ENCODE measurements at regions of chr10 and their contacts with region 1.

Region 1: DNA sequence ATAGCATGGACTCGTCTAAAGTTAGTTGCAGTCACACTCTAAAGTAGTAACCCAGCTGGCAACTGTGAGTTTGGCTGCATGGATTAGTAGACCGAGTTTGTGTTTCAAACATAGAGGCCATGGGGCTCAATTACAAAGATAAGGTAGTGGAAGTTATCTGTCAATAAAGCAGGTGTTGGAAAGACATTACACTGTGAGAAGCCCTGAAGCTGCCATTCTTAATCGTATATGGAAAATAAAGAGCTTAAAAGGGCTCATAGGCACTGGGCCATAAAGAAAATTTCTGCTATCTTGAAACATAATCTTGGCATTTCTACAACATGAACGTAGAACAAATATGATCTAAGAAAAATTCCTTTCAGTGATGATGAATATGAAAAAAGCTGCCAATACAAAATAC is 837.7 kb downstream of the REEP3 start:
- DNase-seq: no peak
- H3K4me3 ChIP-seq: no peak overlapping the region
- H3K27ac ChIP-seq: no peak overlapping the region
- H3K4me1 ChIP-seq: no peaks in the 10 kb centered on the region
- H3K27me3 ChIP-seq: no peaks in the 10 kb centered on the region
- CTCF ChIP-seq: no peak
- POLR2A ChIP-seq: no peak

Region 2: DNA sequence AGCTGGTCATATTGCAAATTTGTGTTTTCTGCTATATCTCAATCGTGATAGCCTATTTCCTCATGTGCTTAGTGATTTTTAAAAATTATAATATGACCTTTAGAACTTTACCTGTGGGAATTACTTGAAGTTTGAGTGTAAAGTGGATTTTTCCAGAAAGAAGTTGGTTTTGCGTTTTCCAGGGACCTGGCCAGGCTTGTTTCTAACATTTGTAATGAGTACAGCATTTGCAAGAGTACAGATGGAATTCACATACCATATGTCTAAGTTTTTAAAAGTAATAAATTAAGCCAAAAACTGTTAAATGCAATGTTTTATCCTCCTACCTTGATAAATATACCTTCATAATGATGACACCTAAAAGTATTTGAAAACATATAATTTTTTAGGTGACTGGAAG is 394.5 kb before region 1 on chr10:
- intact Hi-C with region 1: loop called (anchors 5 kb)
- DNase-seq: no peak
- H3K4me3 ChIP-seq: no peak overlapping the region
- H3K27ac ChIP-seq: no peak overlapping the region
- H3K4me1 ChIP-seq: no peaks in the 10 kb centered on the region
- H3K27me3 ChIP-seq: no peaks in the 10 kb centered on the region
- CTCF ChIP-seq: no peak
- POLR2A ChIP-seq: no peak

Region 3: DNA sequence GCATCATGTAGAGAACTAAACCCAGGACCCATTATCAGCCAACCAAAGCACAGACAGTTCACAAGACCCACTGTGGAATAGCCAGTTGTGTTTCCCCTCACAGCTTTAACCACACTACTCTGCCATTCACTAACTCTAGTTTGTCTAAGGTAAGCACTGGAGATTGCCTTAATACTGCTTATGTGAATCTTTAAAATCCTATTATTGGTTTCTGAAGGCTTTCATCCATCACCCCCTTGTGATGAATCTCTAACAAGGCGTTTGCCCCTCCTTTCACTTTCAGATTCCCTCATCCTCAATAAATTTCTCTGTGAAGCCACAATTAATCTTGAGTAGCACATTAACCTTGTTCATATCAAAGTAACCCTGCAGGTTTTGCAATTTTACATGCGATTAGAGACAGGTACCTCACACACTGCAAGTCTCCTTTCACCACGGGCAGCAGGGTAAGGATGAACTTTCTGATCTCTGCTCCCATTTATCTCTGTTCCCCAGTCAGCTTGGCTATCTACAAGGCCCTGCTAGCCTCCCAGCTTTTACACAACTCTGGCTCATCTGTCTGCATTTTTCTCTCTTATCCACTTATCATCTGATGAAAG is 52.1 kb before region 1 on chr10:
- intact Hi-C with region 1: no loop called
- DNase-seq: no peak
- H3K4me3 ChIP-seq: no peak overlapping the region
- H3K27ac ChIP-seq: no peak overlapping the region
- H3K4me1 ChIP-seq: no peaks in the 10 kb centered on the region
- H3K27me3 ChIP-seq: no peaks in the 10 kb centered on the region
- CTCF ChIP-seq: no peak
- POLR2A ChIP-seq: no peak

Region 4: GRCh38 chr10:64416011-64416410 is 57.1 kb after region 1 on chr10:
- intact Hi-C with region 1: no loop called
- DNase-seq: no peak
- H3K4me3 ChIP-seq: no peak overlapping the region
- H3K27ac ChIP-seq: no peak overlapping the region
- H3K4me1 ChIP-seq: no peaks in the 10 kb centered on the region
- H3K27me3 ChIP-seq: no peaks in the 10 kb centered on the region
- CTCF ChIP-seq: no peak
- POLR2A ChIP-seq: no peak

Region 5: DNA sequence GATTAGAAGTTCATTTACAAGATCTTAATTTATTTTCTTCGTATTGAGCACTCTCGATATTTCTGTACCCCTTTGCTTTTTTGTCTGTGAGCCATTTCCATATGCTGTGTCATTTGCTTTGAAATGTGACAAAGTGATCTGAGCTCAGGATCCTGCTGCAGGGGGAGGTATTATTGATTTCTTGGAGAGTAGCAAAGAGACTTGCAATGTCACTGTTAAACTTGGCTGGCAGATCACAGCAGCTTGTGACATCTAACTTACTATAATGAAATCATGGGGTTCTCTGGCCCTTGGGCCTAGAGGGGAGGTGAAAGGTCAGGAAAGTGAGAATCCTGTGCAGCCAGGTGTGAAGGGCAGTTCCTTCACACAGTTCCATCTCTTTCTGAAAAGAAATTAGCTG is 85.7 kb after region 1 on chr10:
- intact Hi-C with region 1: no loop called
- DNase-seq: no peak
- H3K4me3 ChIP-seq: no peak overlapping the region
- H3K27ac ChIP-seq: no peak overlapping the region
- H3K4me1 ChIP-seq: no peaks in the 10 kb centered on the region
- H3K27me3 ChIP-seq: no peaks in the 10 kb centered on the region
- CTCF ChIP-seq: no peak
- POLR2A ChIP-seq: no peak

Region 6: DNA sequence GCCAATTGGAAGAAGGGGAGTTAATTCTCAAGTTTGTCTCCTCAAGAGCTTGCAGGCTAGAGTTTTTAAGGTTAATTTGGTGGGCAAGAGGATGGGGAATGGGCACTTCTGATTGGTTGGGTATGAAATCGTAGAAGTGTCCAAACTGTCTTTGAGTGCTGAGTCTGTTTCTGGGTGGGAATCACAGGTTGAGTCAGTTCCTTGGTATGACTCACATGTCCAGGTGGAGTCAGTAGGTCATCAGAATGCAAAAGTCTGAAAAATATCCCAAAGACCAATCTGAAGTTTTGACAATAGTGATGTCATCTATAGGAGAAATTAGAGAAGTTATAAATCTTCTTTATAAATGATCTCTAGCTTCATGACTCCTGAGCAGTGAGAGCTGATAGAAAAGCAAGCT is 414.4 kb after region 1 on chr10:
- intact Hi-C with region 1: no loop called
- DNase-seq: no peak
- H3K4me3 ChIP-seq: no peak overlapping the region
- H3K27ac ChIP-seq: no peak overlapping the region
- H3K4me1 ChIP-seq: no peaks in the 10 kb centered on the region
- H3K27me3 ChIP-seq: no peaks in the 10 kb centered on the region
- CTCF ChIP-seq: no peak
- POLR2A ChIP-seq: no peak